GM12878 (cell line): ENCODE measurements at regions of chr17 and their contacts with region 1.

Region 1: GRCh38 chr17:38868817-38869525 is 887 bp upstream of the LASP1 start:
- DNase-seq: peak; percentile 77
- ATAC-seq: peak; percentile 62
- H3K4me3 ChIP-seq: peak overlapping the region; percentile 87
- H3K27ac ChIP-seq: peak overlapping the region; percentile 98
- H3K4me1 ChIP-seq: peaks cover 19% of the 10 kb centered on the region
- H3K27me3 ChIP-seq: no peaks in the 10 kb centered on the region
- CTCF ChIP-seq: peak; percentile 43 to 49 (median 46)
- EP300 ChIP-seq: peak in 1 of 2 experiments; percentile 46; a peak in 1 of 4 replicates
- POLR2A ChIP-seq: peak; percentile 92
- RAD21 ChIP-seq: 0 out of 2 replicates have a peak, but pooled peaks have one; percentile 16

Region 2: DNA sequence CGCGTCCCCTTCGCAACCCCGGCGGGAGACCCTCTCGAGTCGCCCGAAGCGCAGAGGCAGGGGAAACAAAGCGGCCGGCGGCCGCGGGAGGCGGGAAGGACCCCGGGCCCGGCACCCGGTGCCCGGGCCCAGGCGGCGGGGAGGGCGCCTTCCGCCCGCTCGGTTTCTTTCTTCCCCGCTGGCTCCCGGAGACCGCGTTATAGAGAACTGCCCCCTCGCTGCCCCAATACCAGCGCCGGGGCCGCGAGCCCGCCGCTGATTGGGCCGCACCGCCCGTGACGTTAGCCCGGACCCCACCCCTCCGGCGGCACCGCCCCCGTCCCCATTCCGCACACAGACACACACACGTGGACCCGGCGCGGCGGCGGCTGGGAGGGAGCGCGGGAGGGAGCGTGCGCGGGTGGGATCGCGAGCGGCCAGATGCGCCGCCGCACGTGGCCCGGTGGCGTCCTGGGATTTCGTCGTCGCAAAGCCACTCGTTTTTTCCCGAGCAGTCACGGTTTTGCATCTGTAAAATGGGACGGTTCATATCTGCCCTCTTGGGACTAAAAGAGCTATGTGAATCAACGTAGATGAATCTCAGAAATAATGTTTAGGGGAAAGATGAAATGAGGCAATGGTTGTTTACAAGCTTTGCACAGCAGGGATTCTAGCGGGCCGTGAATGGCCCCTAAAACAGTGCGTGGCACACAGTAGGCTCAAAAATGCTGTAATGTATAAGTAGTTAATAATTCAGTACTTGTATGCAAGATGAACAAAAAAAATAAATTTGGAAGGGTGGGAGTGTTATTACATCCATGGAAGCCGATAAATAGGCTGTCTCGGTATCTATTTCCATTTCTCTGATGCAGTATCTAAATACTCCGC is 194.0 kb before region 1 on chr17 and contains the start of gene EPOP:
- CTCF ChIA-PET with region 1: interaction called, 5 read pairs
- POLR2A ChIA-PET with region 1: no interaction called
- RAD21 ChIA-PET with region 1: interaction called, 4 read pairs
- SMC1A ChIA-PET with region 1: interaction called, 4 read pairs
- in situ Hi-C with region 1: no loop called
- intact Hi-C with region 1: loop called (anchors 10 kb)
- DNase-seq: no peak
- ATAC-seq: peak; percentile 88
- H3K4me3 ChIP-seq: peak within 1 kb of the TSS; percentile 84
- H3K27ac ChIP-seq: no peak within 1 kb of the TSS
- H3K4me1 ChIP-seq: peaks cover 34% of the 10 kb centered on the region
- H3K27me3 ChIP-seq: peaks cover 8 to 12% of the 10 kb centered on the region in 2 experiments; a peak in 2 of 4 replicates
- CTCF ChIP-seq: no peak
- EP300 ChIP-seq: no peak
- POLR2A ChIP-seq: peak; percentile 62
- RAD21 ChIP-seq: no peak
- polyA plus RNA-seq, gene EPOP: 0.53 to 1.4 TPM

Region 3: DNA sequence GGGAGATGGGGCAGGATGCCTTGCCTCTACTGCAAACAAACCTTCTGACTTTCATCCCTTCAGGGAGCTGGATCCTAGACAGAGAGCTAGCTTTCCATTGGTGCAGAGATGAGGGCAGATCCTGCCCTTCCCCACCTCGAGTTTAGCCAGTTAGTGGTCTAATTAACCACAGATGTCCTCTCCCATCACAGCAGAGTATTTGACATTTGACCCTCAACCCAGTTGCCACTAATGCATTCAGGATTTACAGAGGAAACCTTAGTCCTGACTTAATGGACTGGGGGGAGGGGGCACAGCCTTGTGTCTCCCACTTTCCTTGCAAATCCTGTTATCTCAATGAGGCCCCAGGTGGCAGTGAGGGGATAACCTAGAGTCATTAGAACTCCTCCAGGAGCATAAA is 79.8 kb before region 1 on chr17:
- CTCF ChIA-PET with region 1: no interaction called
- POLR2A ChIA-PET with region 1: no interaction called
- RAD21 ChIA-PET with region 1: no interaction called
- SMC1A ChIA-PET with region 1: no interaction called
- in situ Hi-C with region 1: no loop called
- intact Hi-C with region 1: no loop called
- DNase-seq: no peak
- ATAC-seq: no peak
- H3K4me3 ChIP-seq: no peak overlapping the region
- H3K27ac ChIP-seq: no peak overlapping the region
- H3K4me1 ChIP-seq: no peaks in the 10 kb centered on the region; the same call in 1 of the 2 replicates
- H3K27me3 ChIP-seq: no peaks in the 10 kb centered on the region
- CTCF ChIP-seq: no peak
- EP300 ChIP-seq: no peak
- POLR2A ChIP-seq: no peak
- RAD21 ChIP-seq: no peak

Region 4: DNA sequence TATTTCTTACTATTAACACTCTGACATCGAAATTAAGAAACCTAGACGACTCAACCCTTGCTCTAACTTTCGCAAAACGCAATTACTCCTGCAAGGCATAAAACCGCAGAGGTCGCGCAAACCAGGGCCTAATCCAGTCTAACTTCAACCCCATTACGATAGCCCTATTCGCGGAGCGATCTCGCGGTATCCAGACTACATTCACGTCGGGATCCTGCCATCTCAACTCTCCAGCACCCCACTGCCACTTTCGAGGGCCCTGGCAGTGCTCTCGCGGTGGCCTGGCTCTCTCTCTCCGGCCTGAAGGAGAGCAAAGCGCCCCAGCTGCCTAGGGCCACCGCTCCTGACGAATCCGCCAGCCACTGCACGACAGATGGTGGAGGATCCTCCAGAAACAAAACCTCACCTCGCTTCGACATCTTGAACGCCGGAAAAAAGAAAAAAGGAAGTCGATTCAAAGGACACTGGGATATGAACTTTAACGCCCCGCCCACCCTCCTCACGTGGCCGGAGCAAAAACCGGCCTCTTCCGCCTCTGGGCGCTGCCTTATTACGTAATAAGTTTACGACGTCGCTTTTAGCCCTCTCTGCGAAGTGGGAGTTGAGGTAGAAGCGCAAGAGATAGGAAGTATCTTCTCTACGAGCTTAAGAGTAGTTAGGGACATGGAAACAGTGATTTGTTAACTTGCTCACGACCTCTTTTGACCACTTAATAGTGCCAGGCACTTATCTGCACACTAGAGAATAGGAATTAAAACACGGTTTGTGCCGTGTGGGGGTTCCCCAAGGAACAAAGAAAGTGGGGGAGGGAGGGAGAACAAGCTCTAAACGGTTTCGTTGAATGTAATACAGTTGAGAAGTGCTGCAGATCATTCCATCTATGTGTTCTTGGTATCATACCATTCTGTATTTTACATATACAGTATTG is 15.4 kb before region 1 on chr17 and contains the start of gene RPL23:
- CTCF ChIA-PET with region 1: interaction called, 13 read pairs
- POLR2A ChIA-PET with region 1: interaction called, 61 read pairs
- RAD21 ChIA-PET with region 1: interaction called, 37 read pairs
- SMC1A ChIA-PET with region 1: interaction called, 20 read pairs
- in situ Hi-C with region 1: no loop called
- intact Hi-C with region 1: loop called (anchors 2 kb)
- DNase-seq: peak; percentile 87
- ATAC-seq: peak; percentile 85
- H3K4me3 ChIP-seq: peak within 1 kb of the TSS; percentile 88
- H3K27ac ChIP-seq: peak within 1 kb of the TSS; percentile 95
- H3K4me1 ChIP-seq: peaks cover 18% of the 10 kb centered on the region
- H3K27me3 ChIP-seq: no peaks in the 10 kb centered on the region
- CTCF ChIP-seq: no peak
- EP300 ChIP-seq: peak in 1 of 2 experiments; percentile 51; a peak in 1 of 4 replicates
- POLR2A ChIP-seq: peak; percentile 99
- RAD21 ChIP-seq: no peak
- polyA plus RNA-seq, gene RPL23: 3,319 to 3,754 TPM

Region 5: DNA sequence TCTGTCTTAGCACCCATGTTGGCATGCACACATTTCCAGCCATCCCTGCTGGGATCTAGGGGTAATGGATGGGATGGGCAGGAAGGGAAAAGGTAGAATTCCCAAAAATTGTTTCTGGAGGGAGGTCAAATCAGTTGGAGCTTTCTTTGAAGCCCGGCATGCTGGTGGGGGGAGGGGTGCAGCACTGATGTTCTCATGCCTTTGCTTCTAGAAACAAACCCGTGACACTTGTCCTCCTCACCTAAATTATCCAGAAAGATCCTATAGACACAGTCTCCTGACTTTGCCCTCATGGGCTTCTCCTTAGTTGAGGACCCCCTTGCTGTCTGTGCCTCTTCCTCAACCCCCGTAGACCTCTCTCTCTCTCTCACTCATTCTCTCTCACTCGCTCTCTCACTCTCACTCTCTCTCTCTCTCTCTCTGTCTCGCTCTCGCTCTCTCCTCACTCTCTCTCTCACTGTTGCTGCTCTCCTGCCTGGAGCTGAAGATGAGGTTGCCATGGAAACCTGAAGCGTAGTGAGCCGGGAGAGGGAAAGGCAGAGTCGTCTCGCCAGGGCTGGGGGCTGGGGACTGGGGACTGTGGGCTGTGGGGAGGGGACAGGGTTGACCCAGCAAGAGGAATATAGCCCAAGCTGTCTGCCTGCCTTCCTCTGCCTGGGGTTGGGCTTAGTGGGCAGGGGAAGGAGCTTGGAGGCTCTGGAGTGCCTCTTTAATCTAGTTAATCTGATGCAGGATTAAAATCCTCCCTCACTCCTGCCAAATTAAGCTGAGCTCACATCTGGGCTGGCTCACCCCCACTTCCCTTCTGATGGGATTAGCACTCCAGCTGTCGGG is 17.0 kb after region 1 on chr17:
- CTCF ChIA-PET with region 1: interaction called, 27 read pairs
- POLR2A ChIA-PET with region 1: no interaction called
- RAD21 ChIA-PET with region 1: interaction called, 3 read pairs
- SMC1A ChIA-PET with region 1: interaction called, 7 read pairs
- in situ Hi-C with region 1: no loop called
- intact Hi-C with region 1: no loop called
- DNase-seq: no peak
- ATAC-seq: no peak
- H3K4me3 ChIP-seq: no peak overlapping the region
- H3K27ac ChIP-seq: no peak overlapping the region
- H3K4me1 ChIP-seq: peaks cover 26% of the 10 kb centered on the region
- H3K27me3 ChIP-seq: no peaks in the 10 kb centered on the region
- CTCF ChIP-seq: no peak
- EP300 ChIP-seq: no peak
- POLR2A ChIP-seq: no peak
- RAD21 ChIP-seq: no peak

Region 6: DNA sequence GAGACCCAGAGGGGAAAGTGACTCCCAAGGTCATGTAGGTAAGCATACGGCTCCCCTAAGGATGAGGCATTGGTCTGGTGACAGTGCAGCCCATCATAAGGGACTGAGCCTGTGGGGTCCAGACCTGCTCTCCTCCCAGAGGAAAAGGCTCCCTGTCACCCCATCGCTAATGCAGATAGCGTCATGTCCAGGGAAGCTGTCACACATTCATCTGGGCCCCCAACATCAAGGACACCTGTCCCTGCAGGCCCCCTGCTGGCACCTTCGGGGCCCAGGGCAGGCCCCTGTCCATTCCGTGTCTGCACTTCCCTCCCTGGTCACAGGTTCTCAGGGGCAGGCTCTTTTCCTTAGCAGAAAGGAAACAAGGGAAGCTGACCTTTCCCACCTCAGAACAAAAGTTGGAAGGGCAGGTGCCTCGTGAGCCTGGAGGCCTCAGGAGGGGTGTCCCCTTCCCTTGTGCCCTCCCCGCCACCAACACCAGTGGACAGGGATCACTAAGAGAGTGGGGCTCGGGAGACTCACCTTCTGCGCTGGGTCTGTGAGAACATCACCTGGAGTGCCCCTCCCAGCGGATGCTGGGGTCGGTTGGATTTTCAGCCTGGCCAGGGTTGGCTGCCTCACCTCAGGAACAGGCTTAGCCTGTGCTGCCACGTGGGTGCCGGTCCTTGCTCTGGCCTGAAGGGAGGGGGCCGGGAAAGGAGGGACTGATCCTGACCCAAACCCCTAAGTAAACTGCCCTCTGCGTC is 39.1 kb after region 1 on chr17:
- CTCF ChIA-PET with region 1: interaction called, 3 read pairs
- POLR2A ChIA-PET with region 1: interaction called, 6 read pairs
- RAD21 ChIA-PET with region 1: interaction called, 6 read pairs
- SMC1A ChIA-PET with region 1: interaction called, 10 read pairs
- in situ Hi-C with region 1: no loop called
- intact Hi-C with region 1: no loop called
- DNase-seq: no peak
- ATAC-seq: peak; percentile 28; the same call in 2 of the 3 replicates
- H3K4me3 ChIP-seq: no peak overlapping the region
- H3K27ac ChIP-seq: no peak overlapping the region; the same call in 1 of the 2 replicates
- H3K4me1 ChIP-seq: peaks cover 5% of the 10 kb centered on the region
- H3K27me3 ChIP-seq: no peaks in the 10 kb centered on the region
- CTCF ChIP-seq: no peak
- EP300 ChIP-seq: no peak
- POLR2A ChIP-seq: no peak
- RAD21 ChIP-seq: no peak